ENCODE measurements at regions of chr13 and their contacts with region 1.

Region 1: GRCh38 chr13:99087096-99087953 is 109.5 kb upstream of the DOCK9 start:
- DNase-seq: peak; percentile 87 to 96 (median 93)
- ATAC-seq: peak; percentile 73
- H3K4me3 ChIP-seq: peak overlapping the region; percentile 70
- H3K4me3 Mint-ChIP-seq: peak overlapping the region; percentile 97
- H3K27ac ChIP-seq: peak overlapping the region; percentile 87 to 99
- H3K27ac Mint-ChIP-seq: peak overlapping the region; percentile 99
- H3K4me1 ChIP-seq: peaks cover 43% of the 10 kb centered on the region
- H3K4me1 Mint-ChIP-seq: peaks cover 48% of the 10 kb centered on the region
- H3K27me3 ChIP-seq: no peaks in the 10 kb centered on the region
- H3K27me3 Mint-ChIP-seq: no peaks in the 10 kb centered on the region
- CTCF ChIP-seq: peak; percentile 30

Region 2: DNA sequence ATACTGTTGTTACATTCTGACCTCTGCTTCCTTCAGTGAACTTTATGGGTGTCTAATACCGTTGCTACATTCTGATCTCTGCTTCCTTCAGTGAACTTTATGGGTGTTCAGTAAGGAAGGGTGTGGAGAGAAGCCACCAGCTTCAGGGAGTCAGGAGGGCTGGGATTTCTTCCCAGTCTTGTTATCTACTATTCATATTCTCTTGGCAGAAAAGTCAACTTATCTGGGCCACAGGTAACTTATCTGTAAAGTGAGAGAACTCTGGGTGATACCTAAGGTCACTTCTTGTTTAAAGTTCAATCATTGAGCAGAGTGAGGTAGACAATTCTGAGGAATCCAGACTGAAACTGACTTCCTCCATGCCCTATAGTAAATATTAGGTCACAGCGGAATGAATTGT is 439.2 kb before region 1 on chr13:
- CTCF ChIA-PET with region 1: no interaction called
- POLR2A ChIA-PET with region 1: no interaction called
- intact Hi-C with region 1: no loop called
- DNase-seq: no peak
- ATAC-seq: no peak
- H3K4me3 ChIP-seq: no peak overlapping the region
- H3K4me3 Mint-ChIP-seq: no peak overlapping the region
- H3K27ac ChIP-seq: no peak overlapping the region
- H3K27ac Mint-ChIP-seq: no peak overlapping the region
- H3K4me1 ChIP-seq: peaks cover under 1% of the 10 kb centered on the region
- H3K4me1 Mint-ChIP-seq: peaks cover 5% of the 10 kb centered on the region
- H3K27me3 ChIP-seq: peaks cover 0 to 4% of the 10 kb centered on the region in 2 experiments
- H3K27me3 Mint-ChIP-seq: no peaks in the 10 kb centered on the region
- CTCF ChIP-seq: no peak

Region 3: GRCh38 chr13:99033814-99034213 is 53.5 kb before region 1 on chr13:
- CTCF ChIA-PET with region 1: interaction called, 12 read pairs
- POLR2A ChIA-PET with region 1: interaction called, 9 read pairs
- intact Hi-C with region 1: no loop called
- DNase-seq: peak in 3 of 14 experiments; percentile 39 to 53 (median 42)
- ATAC-seq: peak; percentile 70
- H3K4me3 ChIP-seq: no peak overlapping the region
- H3K4me3 Mint-ChIP-seq: no peak overlapping the region
- H3K27ac ChIP-seq: no peak overlapping the region
- H3K27ac Mint-ChIP-seq: peak overlapping the region; percentile 6
- H3K4me1 ChIP-seq: peaks cover 4% of the 10 kb centered on the region
- H3K4me1 Mint-ChIP-seq: peaks cover 51% of the 10 kb centered on the region
- H3K27me3 ChIP-seq: no peaks in the 10 kb centered on the region
- H3K27me3 Mint-ChIP-seq: no peaks in the 10 kb centered on the region
- CTCF ChIP-seq: peak; percentile 58

Region 4: GRCh38 chr13:99046851-99047250 is 40.5 kb before region 1 on chr13:
- CTCF ChIA-PET with region 1: interaction called, 9 read pairs
- POLR2A ChIA-PET with region 1: interaction called, 113 read pairs
- intact Hi-C with region 1: loop called (anchors 2 kb)
- DNase-seq: no peak
- ATAC-seq: no peak
- H3K4me3 ChIP-seq: peak overlapping the region; percentile 34
- H3K4me3 Mint-ChIP-seq: peak overlapping the region; percentile 75
- H3K27ac ChIP-seq: peak overlapping the region; percentile 75 to 78
- H3K27ac Mint-ChIP-seq: peak overlapping the region; percentile 95
- H3K4me1 ChIP-seq: peaks cover 93% of the 10 kb centered on the region
- H3K4me1 Mint-ChIP-seq: peaks cover 95% of the 10 kb centered on the region
- H3K27me3 ChIP-seq: no peaks in the 10 kb centered on the region
- H3K27me3 Mint-ChIP-seq: no peaks in the 10 kb centered on the region
- CTCF ChIP-seq: no peak

Region 5: DNA sequence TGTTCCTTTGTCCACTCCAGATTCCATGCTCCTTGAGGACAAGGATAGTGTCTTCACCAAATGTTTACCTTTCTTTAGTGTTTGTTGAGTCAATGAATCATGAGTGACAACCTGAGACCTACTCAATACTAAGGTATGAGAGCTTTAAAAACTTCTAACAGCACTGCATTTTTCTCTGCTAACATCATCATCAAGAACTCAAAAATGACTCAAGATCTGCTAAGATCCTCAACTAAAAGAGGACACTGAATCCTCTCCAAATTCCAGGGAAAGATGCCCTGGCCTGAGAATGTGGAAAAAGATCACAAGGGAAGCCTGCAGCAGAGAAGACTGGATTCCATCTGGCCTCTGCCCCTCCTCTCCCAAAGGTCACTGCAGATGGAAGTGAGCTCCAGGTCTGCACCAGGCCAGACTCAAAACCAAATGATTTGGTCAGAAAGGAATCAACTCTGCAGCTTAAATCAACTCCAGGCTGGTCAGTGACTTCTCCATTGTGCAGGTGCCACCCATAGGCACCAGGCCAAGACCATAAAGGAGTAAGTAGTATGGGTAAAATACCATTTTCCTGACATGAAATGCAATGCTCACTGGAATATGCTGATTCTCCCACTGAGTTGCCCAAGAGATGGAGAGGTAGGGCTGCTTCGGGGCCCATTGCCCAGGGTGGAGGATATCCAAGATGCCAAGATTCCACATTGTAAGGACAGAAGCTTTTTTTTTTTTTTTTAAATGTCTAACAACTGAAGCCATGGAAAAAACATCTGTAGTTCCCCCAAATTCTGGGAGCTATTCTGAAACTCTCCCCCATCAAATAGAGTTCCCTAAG is 20.0 kb before region 1 on chr13:
- CTCF ChIA-PET with region 1: interaction called, 6 read pairs
- POLR2A ChIA-PET with region 1: interaction called, 16 read pairs
- intact Hi-C with region 1: no loop called
- DNase-seq: no peak
- ATAC-seq: no peak
- H3K4me3 ChIP-seq: no peak overlapping the region
- H3K4me3 Mint-ChIP-seq: peak overlapping the region; percentile 30
- H3K27ac ChIP-seq: no peak overlapping the region
- H3K27ac Mint-ChIP-seq: peak overlapping the region; percentile 12
- H3K4me1 ChIP-seq: peaks cover 41% of the 10 kb centered on the region
- H3K4me1 Mint-ChIP-seq: peaks cover 92% of the 10 kb centered on the region
- H3K27me3 ChIP-seq: no peaks in the 10 kb centered on the region
- H3K27me3 Mint-ChIP-seq: no peaks in the 10 kb centered on the region
- CTCF ChIP-seq: no peak

Region 6: GRCh38 chr13:99200432-99201167 is 113.3 kb after region 1 on chr13 and contains the start of gene UBAC2:
- CTCF ChIA-PET with region 1: no interaction called
- POLR2A ChIA-PET with region 1: interaction called, 26 read pairs
- intact Hi-C with region 1: no loop called
- DNase-seq: peak; percentile 90 to 100 (median 97)
- ATAC-seq: peak; percentile 79
- H3K4me3 ChIP-seq: peak within 1 kb of the TSS; percentile 99
- H3K4me3 Mint-ChIP-seq: peak within 1 kb of the TSS; percentile 95
- H3K27ac ChIP-seq: peak within 1 kb of the TSS; percentile 97 to 99
- H3K27ac Mint-ChIP-seq: peak within 1 kb of the TSS; percentile 93
- H3K4me1 ChIP-seq: peaks cover 36% of the 10 kb centered on the region
- H3K4me1 Mint-ChIP-seq: peaks cover 67% of the 10 kb centered on the region
- H3K27me3 ChIP-seq: no peaks in the 10 kb centered on the region
- H3K27me3 Mint-ChIP-seq: no peaks in the 10 kb centered on the region
- CTCF ChIP-seq: no peak
- total RNA-seq, gene UBAC2: 59.8 to 67.4 TPM

Region 7: DNA sequence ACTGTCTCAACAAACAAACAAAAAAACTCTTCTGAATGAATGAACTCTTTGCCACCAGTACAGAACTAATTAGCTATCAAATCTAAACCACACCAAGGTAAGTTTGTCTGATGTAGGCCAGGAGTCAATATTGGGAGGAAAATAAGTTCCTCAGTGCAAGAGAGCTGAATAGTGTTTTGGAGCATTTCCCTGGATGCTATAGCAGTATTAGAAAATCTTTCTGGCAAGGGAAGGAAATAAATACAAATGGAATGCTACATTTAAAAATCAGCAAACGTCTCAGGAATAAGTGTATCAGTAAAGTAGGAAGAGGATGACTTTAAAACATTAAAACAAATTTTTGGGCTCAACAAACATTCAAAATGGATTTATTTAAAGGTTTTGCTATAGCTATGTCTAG is 1668.6 kb after region 1 on chr13:
- CTCF ChIA-PET with region 1: no interaction called
- POLR2A ChIA-PET with region 1: no interaction called
- intact Hi-C with region 1: no loop called
- DNase-seq: no peak
- ATAC-seq: no peak
- H3K4me3 ChIP-seq: no peak overlapping the region
- H3K4me3 Mint-ChIP-seq: no peak overlapping the region
- H3K27ac ChIP-seq: no peak overlapping the region
- H3K27ac Mint-ChIP-seq: no peak overlapping the region
- H3K4me1 ChIP-seq: no peaks in the 10 kb centered on the region
- H3K4me1 Mint-ChIP-seq: no peaks in the 10 kb centered on the region
- H3K27me3 ChIP-seq: no peaks in the 10 kb centered on the region
- H3K27me3 Mint-ChIP-seq: peaks cover 4% of the 10 kb centered on the region
- CTCF ChIP-seq: no peak

Measured in CD4-positive, alpha-beta T cell (primary cell).